Activated T-helper 1 cell treated with anti-CD3 and anti-CD28 coated beads, Interleukin-12 subunit alpha, Interleukin-12 subunit beta, Interleukin-2, Interleukin-4 antibody, amounts not matched to agents 30 ng/mL and 10 ng/mL and 1 ng/mL, durations not matched to agents 14 hours and 24 hours and 36 hours (primary cell): ENCODE measurements at regions of chr3 and their contacts with region 1.

Region 1: GRCh38 chr3:56862352-56863074 is 60.8 kb upstream of the ARHGEF3 start:
- DNase-seq: no peak
- H3K4me3 Mint-ChIP-seq: peak overlapping the region; percentile 38
- H3K27ac Mint-ChIP-seq: peak overlapping the region; percentile 90
- H3K4me1 Mint-ChIP-seq: peaks cover 75% of the 10 kb centered on the region
- H3K27me3 Mint-ChIP-seq: no peaks in the 10 kb centered on the region

Region 2: GRCh38 chr3:56725175-56725574 is 137.3 kb before region 1 on chr3:
- intact Hi-C with region 1: loop called (anchors 1 kb)
- DNase-seq: peak; percentile 68
- H3K4me3 Mint-ChIP-seq: peak overlapping the region; percentile 81
- H3K27ac Mint-ChIP-seq: peak overlapping the region; percentile 93
- H3K4me1 Mint-ChIP-seq: peaks cover 69% of the 10 kb centered on the region
- H3K27me3 Mint-ChIP-seq: no peaks in the 10 kb centered on the region

Region 3: GRCh38 chr3:56758539-56758981 is 104.0 kb before region 1 on chr3:
- intact Hi-C with region 1: loop called (anchors 1 kb)
- DNase-seq: peak; percentile 9
- H3K4me3 Mint-ChIP-seq: peak overlapping the region; percentile 53
- H3K27ac Mint-ChIP-seq: peak overlapping the region; percentile 79
- H3K4me1 Mint-ChIP-seq: peaks cover 81% of the 10 kb centered on the region
- H3K27me3 Mint-ChIP-seq: no peaks in the 10 kb centered on the region

Region 4: GRCh38 chr3:56839784-56840715 is 22.5 kb before region 1 on chr3:
- intact Hi-C with region 1: loop called (anchors 2 kb)
- DNase-seq: no peak
- H3K4me3 Mint-ChIP-seq: no peak overlapping the region
- H3K27ac Mint-ChIP-seq: no peak overlapping the region
- H3K4me1 Mint-ChIP-seq: peaks cover 13% of the 10 kb centered on the region
- H3K27me3 Mint-ChIP-seq: no peaks in the 10 kb centered on the region

Region 5: GRCh38 chr3:56887402-56888025 is 25.0 kb after region 1 on chr3:
- intact Hi-C with region 1: loop called (anchors 2 kb)
- DNase-seq: no peak
- H3K4me3 Mint-ChIP-seq: peak overlapping the region; percentile 57
- H3K27ac Mint-ChIP-seq: peak overlapping the region; percentile 47
- H3K4me1 Mint-ChIP-seq: peaks cover 58% of the 10 kb centered on the region
- H3K27me3 Mint-ChIP-seq: peaks cover 5% of the 10 kb centered on the region

Region 6: GRCh38 chr3:57279685-57280084 is 417.2 kb after region 1 on chr3:
- intact Hi-C with region 1: no loop called
- DNase-seq: no peak
- H3K4me3 Mint-ChIP-seq: no peak overlapping the region
- H3K27ac Mint-ChIP-seq: no peak overlapping the region
- H3K4me1 Mint-ChIP-seq: no peaks in the 10 kb centered on the region
- H3K27me3 Mint-ChIP-seq: no peaks in the 10 kb centered on the region